ENCODE measurements at regions of chr10 and their contacts with region 1.

Region 1: DNA sequence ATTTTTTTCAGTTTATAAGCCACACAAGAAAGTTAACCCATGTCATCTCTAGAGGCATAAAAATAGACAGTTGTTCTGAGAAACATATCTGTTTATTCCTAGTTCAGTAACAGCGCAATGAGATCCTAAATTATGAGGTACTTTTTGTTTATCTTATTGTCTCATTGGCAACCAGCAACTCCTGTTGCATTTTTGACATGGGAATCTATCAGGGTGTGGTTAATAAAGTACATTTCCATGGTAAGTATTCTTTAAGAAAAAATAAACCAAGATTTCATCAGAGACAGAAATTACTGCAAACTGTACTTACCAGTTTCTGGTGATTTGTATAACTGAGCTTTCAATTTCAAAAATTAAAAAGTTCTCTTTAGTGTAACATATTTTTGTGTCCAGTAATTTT is 9.0 kb downstream of the FAS start:
- DNase-seq: no peak
- H3K4me3 ChIP-seq: no peak overlapping the region
- H3K27ac ChIP-seq: no peak overlapping the region
- H3K4me1 ChIP-seq: no peaks in the 10 kb centered on the region
- H3K27me3 ChIP-seq: no peaks in the 10 kb centered on the region
- CTCF ChIP-seq: no peak

Region 2: GRCh38 chr10:89053555-89053954 is 53.9 kb after region 1 on chr10:
- CTCF ChIA-PET with region 1: no interaction called
- POLR2A ChIA-PET with region 1: interaction called, 15 read pairs
- intact Hi-C with region 1: no loop called
- DNase-seq: no peak
- H3K4me3 ChIP-seq: no peak overlapping the region
- H3K27ac ChIP-seq: no peak overlapping the region
- H3K4me1 ChIP-seq: no peaks in the 10 kb centered on the region
- H3K27me3 ChIP-seq: no peaks in the 10 kb centered on the region
- CTCF ChIP-seq: no peak